Ascending aorta (tissue), 2 donors: ENCODE measurements at regions of chr1 and their contacts with region 1.

Region 1: GRCh38 chr1:36187800-36188593 is 32.0 kb downstream of the MAP7D1 start:
- DNase-seq: peak; percentile 65 to 95
- H3K4me3 ChIP-seq: peak overlapping the region in 1 of 2 donors; percentile 1
- H3K27ac ChIP-seq: peak overlapping the region; percentile 78 to 79
- H3K4me1 ChIP-seq: peaks cover 0 to 15% of the 10 kb centered on the region in 2 donors
- H3K27me3 ChIP-seq: no peaks in the 10 kb centered on the region
- CTCF ChIP-seq: peak; percentile 73 to 94 (median 91)

Region 2: GRCh38 chr1:36099681-36100341 is 88.2 kb before region 1 on chr1:
- intact Hi-C with region 1: loop called (anchors 1 kb)
- DNase-seq: peak in 1 of 2 donors; percentile 88
- H3K4me3 ChIP-seq: no peak overlapping the region
- H3K27ac ChIP-seq: peak overlapping the region in 1 of 2 donors; percentile 37
- H3K4me1 ChIP-seq: peaks cover 0 to 10% of the 10 kb centered on the region in 2 donors
- H3K27me3 ChIP-seq: no peaks in the 10 kb centered on the region
- CTCF ChIP-seq: peak; percentile 74 to 85 (median 81)

Region 3: DNA sequence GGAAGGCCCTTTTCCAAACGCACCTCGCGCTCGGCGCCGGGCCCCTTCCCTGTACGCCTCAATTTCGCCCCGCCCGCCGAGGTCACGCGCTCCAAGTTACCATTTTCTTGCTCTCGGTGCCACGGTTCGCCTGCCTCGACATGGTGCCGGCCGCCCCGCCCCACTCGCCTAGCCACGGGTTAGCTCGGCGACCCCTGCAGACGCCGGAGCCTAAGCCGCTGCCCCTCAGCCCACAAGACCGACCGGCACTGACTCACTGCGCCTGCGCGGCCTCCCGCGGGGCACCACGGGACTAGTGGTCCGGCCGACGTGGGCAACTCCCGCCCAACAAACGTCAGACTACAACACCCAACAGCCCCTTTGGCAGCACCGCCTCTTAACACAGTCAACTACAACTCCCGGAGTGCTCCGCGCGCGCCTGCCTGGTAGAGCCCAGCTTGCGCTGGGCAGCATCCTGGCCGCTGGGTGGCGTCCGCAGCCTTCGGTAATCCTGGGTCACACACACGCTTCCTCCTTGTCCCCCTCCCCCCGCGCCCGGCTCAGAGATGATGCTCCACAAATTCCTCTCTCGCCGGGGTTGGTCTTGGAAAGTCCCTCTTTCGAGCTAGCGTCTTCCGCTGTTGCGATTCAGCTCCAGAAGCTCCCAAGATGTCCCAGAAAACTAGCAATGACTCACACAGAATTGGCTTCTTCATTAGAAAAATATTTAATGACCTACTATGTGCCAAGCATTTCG is 38.6 kb before region 1 on chr1 and contains the start of gene TRAPPC3:
- intact Hi-C with region 1: loop called (anchors 1 kb)
- DNase-seq: peak; percentile 100
- H3K4me3 ChIP-seq: peak within 1 kb of the TSS; percentile 71 to 77
- H3K27ac ChIP-seq: peak within 1 kb of the TSS; percentile 93 to 98
- H3K4me1 ChIP-seq: peaks cover 26 to 36% of the 10 kb centered on the region in 2 donors
- H3K27me3 ChIP-seq: no peaks in the 10 kb centered on the region
- CTCF ChIP-seq: peak; percentile 88 to 98 (median 95)
- total RNA-seq, gene TRAPPC3: 52.0 TPM

Region 4: DNA sequence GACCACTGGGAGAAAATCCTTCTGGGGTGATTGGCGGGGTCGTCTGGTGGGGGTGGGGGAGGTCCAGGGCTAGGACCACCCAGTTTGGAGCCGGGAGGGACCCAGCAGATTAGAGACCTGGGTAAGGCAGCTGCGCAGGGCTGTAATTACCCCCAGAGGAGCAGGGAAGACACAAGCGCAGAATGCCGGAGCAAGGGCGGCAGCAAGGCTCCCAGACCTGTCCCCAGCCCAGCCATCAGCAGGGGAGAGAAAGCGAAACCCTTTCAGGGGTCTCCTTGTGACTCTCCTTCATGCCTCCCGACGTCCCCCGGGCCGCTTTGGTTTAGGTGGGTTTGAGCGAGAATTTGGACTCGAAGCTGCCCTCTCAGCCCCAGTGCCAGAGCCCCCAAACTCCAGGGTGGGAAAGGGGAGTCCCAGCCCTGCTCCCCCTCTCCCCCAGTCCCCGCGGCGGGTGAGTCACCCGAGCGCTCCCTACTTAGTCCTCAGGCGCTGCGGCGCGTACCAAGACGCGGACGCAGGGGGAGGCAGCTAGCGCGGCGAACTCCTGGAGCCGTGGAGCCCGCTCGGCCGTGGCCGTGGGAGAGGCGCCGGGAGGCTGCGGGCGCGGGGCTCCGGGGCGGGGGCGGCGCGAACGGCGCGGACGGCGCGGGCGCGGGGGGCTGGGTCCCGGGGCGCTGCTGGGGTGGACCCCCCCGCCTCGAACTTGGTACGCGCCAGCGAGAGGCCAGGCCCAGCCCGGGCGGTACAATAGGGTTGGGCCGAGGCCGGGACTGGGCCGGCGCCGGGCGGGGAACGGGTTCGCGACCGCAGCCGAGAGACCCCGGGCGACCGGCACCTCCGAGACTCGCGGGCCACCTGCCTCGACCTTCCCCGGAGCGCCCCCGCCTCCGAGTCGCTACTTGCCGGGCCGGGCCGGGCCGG is 32.3 kb before region 1 on chr1 and contains the start of gene MAP7D1:
- intact Hi-C with region 1: loop called (anchors 2 kb)
- DNase-seq: peak; percentile 61 to 92
- H3K4me3 ChIP-seq: peak within 1 kb of the TSS; percentile 95 to 100
- H3K27ac ChIP-seq: peak within 1 kb of the TSS; percentile 98 to 100
- H3K4me1 ChIP-seq: peaks cover 39 to 51% of the 10 kb centered on the region in 2 donors
- H3K27me3 ChIP-seq: no peaks in the 10 kb centered on the region
- CTCF ChIP-seq: no peak
- total RNA-seq, gene MAP7D1: 209 TPM

Region 5: DNA sequence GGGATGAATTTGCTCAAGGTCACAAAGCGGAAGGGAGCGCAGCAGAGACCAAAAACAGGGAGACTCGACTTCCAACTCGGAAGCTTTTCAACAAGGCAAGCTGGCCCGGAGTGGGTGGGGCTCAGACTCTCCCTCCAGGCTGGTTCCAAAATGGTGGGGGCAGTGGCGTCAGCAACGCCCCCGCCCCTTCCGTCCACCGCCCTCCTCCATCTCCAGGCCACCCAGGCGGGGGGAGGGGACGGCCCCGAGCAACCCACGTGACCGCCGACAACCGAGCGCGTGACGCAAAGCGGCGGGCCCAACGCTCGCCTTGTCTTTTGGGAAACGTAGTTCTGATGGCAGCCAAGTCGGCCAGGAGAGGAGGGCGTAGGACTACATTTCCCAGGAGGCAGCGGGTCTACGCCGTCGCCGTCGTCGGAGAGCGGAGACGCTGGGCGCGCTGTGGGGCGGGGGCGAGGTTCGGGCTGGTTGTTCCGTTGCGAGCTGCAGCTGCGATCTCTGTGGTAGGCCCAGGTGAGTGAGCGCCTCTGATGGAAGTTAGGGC is 36.1 kb after region 1 on chr1 and contains the start of gene THRAP3:
- intact Hi-C with region 1: loop called (anchors 1 kb)
- DNase-seq: peak; percentile 98 to 100
- H3K4me3 ChIP-seq: peak within 1 kb of the TSS; percentile 78 to 87
- H3K27ac ChIP-seq: peak within 1 kb of the TSS; percentile 97 to 98
- H3K4me1 ChIP-seq: peaks cover 9 to 38% of the 10 kb centered on the region in 2 donors
- H3K27me3 ChIP-seq: no peaks in the 10 kb centered on the region
- CTCF ChIP-seq: no peak
- total RNA-seq, gene THRAP3: 39.5 TPM

Region 6: DNA sequence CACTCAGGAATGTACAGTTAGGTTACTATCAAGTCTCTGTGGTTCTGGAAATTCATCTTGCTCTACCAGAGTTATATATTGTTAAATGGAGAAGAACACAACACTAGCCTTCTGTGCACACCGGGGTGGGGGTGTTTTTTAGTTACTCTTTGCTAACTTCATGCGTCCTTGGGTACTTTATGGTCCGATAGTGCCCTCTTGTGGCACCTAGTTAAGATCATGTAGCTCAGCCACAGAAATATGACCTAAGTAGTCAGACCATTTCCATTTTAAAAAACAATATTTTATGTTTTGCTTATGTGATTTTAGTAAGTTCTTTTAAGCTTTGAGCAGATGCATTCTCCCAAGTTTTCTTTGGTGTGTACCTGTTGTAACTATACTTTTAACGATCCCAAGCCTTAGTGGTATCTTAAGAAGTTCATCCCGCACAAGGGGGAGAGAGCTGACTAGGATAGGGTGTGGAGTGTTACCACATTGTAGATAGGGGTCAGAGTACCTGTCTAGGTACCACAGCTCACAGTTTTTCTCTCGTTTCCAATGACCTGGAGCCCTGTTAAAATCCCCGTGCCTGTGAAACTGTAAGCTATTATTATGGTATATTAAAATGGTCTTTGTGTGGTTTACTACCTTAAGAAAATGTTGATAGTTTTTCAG is 97.6 kb after region 1 on chr1:
- intact Hi-C with region 1: loop called (anchors 1 kb)
- DNase-seq: peak in 1 of 2 donors; percentile 86
- H3K4me3 ChIP-seq: no peak overlapping the region
- H3K27ac ChIP-seq: peak overlapping the region in 1 of 2 donors; percentile 20
- H3K4me1 ChIP-seq: peaks cover 3 to 4% of the 10 kb centered on the region in 2 donors
- H3K27me3 ChIP-seq: no peaks in the 10 kb centered on the region
- CTCF ChIP-seq: peak; percentile 63 to 71 (median 70)

Region 7: GRCh38 chr1:36369061-36369861 is 181.3 kb after region 1 on chr1:
- intact Hi-C with region 1: no loop called
- DNase-seq: peak in 1 of 2 donors; percentile 87
- H3K4me3 ChIP-seq: no peak overlapping the region
- H3K27ac ChIP-seq: no peak overlapping the region
- H3K4me1 ChIP-seq: peaks cover 20 to 34% of the 10 kb centered on the region in 2 donors
- H3K27me3 ChIP-seq: no peaks in the 10 kb centered on the region
- CTCF ChIP-seq: peak; percentile 90 to 98 (median 91)